Transverse colon (tissue), 4 donors: ENCODE measurements at regions of chr1 and their contacts with region 1.

Region 1: DNA sequence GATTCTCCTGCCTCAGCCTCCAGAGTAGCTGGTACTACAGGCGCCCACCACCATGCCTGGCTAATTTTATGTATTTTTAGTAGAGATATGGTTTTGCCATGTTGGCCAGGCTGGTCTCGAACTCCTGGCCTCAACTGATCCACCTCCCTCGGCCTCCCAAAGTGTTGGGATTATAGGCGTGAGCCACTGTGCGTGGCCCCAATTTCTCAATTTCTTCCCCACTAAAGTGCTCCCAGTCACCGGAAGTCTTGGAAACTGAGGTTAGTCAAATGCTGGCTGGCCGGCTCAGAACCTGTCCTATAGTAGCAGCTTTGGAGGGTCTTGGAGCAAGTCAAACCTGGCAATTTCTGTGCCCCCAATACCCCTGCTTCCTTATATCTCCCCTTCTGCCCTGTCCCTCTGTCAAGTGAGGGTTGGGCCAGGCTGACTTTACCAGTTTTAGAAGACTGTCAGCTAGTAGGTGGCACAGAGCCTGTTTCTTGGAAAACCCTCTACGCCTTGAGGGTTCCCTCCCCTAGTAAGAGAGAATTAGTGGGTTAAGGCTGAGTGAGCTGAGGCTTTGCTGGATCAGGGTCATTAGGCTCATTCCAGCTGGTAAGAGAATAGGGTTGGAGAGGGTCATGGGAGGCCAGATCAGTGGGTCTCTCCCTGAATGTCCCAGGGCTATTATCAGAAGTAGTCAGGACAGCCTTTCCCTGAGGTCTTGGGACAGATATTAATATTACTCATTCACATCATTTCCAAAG is 8.3 kb upstream of the EPB41 start:
- DNase-seq: no peak
- H3K4me3 ChIP-seq: no peak overlapping the region
- H3K27ac ChIP-seq: no peak overlapping the region
- H3K4me1 ChIP-seq: no peaks in the 10 kb centered on the region
- H3K27me3 ChIP-seq: no peaks in the 10 kb centered on the region
- CTCF ChIP-seq: no peak
- EP300 ChIP-seq: no peak
- POLR2A ChIP-seq: no peak

Region 2: GRCh38 chr1:28983509-28984310 is 77.6 kb after region 1 on chr1:
- in situ Hi-C with region 1: no loop called
- intact Hi-C with region 1: loop called (anchors 10 kb)
- DNase-seq: no peak
- H3K4me3 ChIP-seq: no peak overlapping the region
- H3K27ac ChIP-seq: no peak overlapping the region
- H3K4me1 ChIP-seq: peaks cover 0 to 4% (median 0%) of the 10 kb centered on the region in 4 donors
- H3K27me3 ChIP-seq: no peaks in the 10 kb centered on the region
- CTCF ChIP-seq: no peak
- EP300 ChIP-seq: no peak
- POLR2A ChIP-seq: no peak